ENCODE measurements at regions of chr10 and their contacts with region 1.

Region 1: DNA sequence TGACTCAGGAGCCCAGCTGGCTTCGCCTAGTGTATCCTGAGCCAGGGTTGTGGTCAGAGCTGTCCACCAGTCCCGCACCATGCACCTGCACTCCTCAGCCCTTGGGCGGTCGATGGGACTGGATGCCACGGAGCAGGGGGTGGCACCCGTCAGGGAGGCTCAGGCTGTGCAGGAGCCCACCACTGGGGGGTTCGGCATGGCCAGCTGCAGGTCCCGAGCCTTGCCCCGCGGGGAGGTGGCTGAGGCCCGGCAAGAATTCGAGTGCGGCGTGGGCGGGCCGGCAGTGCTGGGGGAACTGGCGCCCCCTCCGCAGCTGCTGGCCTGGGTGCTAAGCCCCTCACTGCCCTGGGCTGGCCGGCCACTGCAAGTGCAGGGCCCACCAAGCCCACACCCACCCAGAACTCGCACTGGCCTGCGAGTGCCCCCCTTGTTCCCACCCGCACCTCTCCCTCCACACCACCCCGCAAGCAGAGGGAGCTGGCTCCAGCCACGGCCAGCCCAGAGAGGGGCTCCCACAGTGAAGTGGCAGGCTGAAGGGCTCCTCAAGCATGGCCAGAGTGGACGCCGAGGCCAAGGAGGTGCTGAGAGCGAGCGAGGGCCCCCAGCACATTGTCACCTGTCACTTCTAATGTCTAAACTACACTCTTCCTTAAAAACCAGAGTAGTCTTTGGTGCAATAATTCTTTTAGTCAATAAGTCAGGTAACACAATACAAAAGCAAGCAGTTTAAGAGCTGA is 11.0 kb downstream of the FAM25A start:
- DNase-seq: no peak
- ATAC-seq: no peak
- H3K4me3 ChIP-seq: no peak overlapping the region
- H3K4me3 Mint-ChIP-seq: no peak overlapping the region
- H3K27ac ChIP-seq: no peak overlapping the region
- H3K27ac Mint-ChIP-seq: no peak overlapping the region
- H3K4me1 ChIP-seq: no peaks in the 10 kb centered on the region
- H3K4me1 Mint-ChIP-seq: no peaks in the 10 kb centered on the region
- H3K27me3 ChIP-seq: no peaks in the 10 kb centered on the region
- H3K27me3 Mint-ChIP-seq: no peaks in the 10 kb centered on the region

Region 2: DNA sequence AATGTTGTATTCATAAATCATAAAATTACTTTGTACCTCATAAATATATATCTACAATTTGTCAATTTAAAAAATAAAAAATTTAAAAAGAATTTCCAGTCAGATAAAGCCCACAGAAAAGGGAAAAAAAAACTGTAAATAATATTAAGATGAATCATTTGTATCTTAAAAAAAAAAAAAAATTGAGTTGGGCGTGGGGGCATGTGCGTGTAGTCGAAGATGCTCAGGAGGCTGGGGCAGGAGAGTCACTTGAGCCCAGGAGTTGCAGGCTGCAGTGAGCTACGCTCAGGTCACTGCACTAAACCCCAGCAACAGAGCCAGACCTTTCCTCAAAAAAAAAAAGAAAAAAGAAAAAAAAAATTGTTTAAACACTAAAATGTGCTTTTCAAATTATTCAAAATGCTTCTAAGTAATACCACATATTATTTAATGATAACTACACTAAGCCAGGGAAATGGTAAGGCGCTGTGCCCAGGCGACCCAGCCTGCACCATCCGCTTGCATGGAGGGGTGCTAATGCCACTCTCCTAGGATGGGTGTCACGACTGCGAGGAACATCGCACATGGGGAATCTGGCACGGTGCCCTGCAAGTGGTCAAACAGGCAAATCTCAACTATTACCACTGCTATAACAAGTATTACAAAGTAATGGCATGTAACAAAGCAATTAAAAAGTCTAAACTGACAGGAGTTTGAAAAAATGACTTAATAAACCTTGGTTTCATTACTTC is 48.2 kb after region 1 on chr10:
- CTCF ChIA-PET with region 1: no interaction called
- POLR2A ChIA-PET with region 1: no interaction called
- DNase-seq: no peak
- ATAC-seq: no peak
- H3K4me3 ChIP-seq: no peak overlapping the region
- H3K4me3 Mint-ChIP-seq: no peak overlapping the region
- H3K27ac ChIP-seq: no peak overlapping the region
- H3K27ac Mint-ChIP-seq: no peak overlapping the region
- H3K4me1 ChIP-seq: peaks cover 0 to 6% of the 10 kb centered on the region in 2 experiments
- H3K4me1 Mint-ChIP-seq: peaks cover 30 to 40% (median 38%) of the 10 kb centered on the region in 3 donors
- H3K27me3 ChIP-seq: no peaks in the 10 kb centered on the region
- H3K27me3 Mint-ChIP-seq: no peaks in the 10 kb centered on the region

Region 3: DNA sequence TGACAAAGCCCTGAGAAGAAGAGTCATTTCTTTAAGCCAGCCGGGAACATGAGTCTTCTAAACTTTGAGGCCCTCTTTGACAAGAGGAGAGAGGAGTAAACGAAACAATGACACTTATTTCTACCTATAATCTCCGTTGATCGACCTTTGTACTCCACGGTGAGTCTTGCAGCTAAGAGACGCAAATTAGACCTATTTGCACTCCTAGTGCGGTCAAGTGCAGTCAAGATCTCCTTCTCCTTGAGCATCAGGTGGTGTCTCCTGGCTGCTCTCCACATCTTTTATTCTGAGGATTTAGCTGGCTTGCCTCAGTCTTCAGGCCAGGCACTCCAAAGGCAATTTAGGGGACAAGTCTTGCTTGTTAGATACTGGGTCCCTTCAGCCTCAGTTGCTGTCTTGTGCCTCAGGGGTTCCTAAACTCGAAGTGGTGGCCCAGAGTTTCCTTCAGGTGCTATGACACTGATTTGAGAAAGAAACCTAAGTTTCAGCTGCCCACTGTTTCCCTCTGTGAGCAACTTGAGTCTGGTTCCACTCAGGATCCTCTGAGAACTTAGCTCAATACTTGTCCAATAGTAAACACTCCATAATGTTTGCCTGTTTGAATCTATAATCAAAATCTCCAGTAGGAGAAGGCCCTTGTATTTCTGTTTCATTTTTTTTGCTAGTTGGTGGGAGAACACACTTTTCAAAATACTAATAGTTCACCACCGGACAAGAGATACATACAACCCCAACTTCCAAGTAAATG is 1239.2 kb after region 1 on chr10:
- CTCF ChIA-PET with region 1: no interaction called
- POLR2A ChIA-PET with region 1: interaction called in 1 of 2 experiments, 11 read pairs
- DNase-seq: no peak
- ATAC-seq: no peak
- H3K4me3 ChIP-seq: no peak overlapping the region
- H3K4me3 Mint-ChIP-seq: peak overlapping the region in 1 of 3 donors; percentile 66
- H3K27ac ChIP-seq: no peak overlapping the region
- H3K27ac Mint-ChIP-seq: peak overlapping the region; percentile 31 to 91
- H3K4me1 ChIP-seq: peaks cover 20 to 27% of the 10 kb centered on the region in 2 experiments
- H3K4me1 Mint-ChIP-seq: peaks cover 44 to 58% (median 54%) of the 10 kb centered on the region in 3 donors
- H3K27me3 ChIP-seq: no peaks in the 10 kb centered on the region
- H3K27me3 Mint-ChIP-seq: no peaks in the 10 kb centered on the region